ENCODE measurements at regions of chr17 and their contacts with region 1.

Region 1: DNA sequence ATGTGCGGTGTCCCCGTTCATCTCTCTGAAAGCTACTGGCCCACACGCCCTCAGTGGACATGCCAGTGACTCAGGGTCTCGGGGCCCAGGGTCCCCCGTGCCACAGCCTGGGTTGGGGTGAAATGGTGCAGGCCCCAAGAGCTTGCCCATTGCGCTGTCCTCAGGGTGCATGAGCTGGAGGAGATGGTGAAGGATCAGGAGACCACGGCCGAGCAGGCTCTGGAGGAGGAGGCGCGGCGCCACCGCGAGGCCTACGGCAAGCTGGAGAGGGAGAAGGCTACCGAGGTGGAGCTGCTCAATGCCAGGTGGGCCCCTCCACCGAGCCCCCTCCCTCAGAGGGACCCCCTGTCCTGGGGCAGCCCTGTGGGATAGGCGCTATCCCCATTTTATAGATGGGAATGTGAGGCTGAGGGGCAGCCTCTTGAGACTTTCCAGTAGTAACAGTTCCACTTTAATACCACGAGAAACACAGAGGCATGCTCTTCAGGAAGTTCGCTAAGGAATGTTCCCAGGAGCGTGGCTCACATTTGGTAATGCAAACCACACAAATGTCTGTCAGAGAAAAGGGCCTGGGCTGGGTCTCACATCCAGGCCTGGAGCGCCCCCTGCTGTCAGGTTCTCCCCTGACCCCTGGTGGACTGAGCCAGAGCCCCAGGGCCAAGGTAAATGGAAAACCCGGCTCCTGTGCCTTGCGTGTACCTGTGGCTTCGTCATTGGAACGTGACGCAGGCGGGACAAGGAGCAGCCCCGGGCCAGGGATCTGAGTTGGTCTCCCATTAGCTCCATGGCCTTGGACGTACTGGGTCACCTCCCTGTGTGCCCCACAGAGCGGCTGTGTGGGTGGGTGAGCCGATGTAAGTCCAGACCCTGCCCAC is 133.7 kb downstream of the RAB11FIP4 start:
- DNase-seq: peak; percentile 92
- CTCF ChIP-seq: peak; percentile 86

Region 2: DNA sequence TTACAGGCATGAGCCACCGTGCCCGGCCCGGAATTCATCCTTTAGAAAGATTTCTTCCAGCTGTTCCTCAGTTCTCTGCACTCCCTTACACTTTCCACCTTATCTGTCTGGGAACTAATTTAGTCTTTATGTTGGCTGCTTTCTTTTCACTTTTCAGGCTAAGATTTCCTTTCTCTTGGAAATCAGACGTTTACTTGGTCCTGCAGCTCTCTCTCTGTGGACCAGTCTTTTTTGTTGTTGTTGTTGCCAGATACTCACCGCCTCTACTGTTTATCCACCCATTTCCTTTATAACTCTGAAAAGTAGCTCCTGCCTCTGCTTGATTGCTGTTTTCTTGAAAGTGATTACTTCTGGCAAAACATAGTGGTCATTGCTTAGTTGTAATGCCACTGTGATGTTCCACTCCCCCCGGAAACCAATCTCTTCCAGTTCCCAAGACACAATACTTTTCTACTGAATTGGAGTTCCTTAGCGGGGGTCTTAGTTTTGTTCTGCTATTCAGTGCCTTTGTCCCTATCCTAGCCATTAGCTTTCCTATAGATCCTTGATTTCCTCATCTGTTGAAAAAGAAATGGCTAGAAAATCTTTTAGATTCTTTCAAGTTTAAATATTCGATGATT is 424.2 kb before region 1 on chr17:
- in situ Hi-C with region 1: no loop called
- DNase-seq: no peak
- CTCF ChIP-seq: no peak

Region 3: GRCh38 chr17:31444026-31444425 is 81.1 kb before region 1 on chr17:
- in situ Hi-C with region 1: loop called (anchors 5 kb)
- DNase-seq: no peak
- CTCF ChIP-seq: no peak

Measured in GM13976 (cell line).